Left cardiac atrium (tissue), 4 donors: ENCODE measurements at regions of chr7 and their contacts with region 1.

Region 1: GRCh38 chr7:35624299-35625186 is 70.4 kb downstream of the HERPUD2 start:
- DNase-seq: no peak
- ATAC-seq: peak; percentile 79 to 84

Region 2: GRCh38 chr7:35537067-35538023 is 87.2 kb before region 1 on chr7:
- intact Hi-C with region 1: loop called in 1 of 2 experiments (anchors 5 kb)
- DNase-seq: peak; percentile 84
- ATAC-seq: peak; percentile 96 to 98